GM12878 (cell line): ENCODE measurements at regions of chr2 and their contacts with region 1.

Region 1: GRCh38 chr2:37877457-37878315 is 47.4 kb upstream of the RMDN2 start:
- DNase-seq: no peak
- ATAC-seq: peak; percentile 77
- H3K4me3 ChIP-seq: no peak overlapping the region
- H3K27ac ChIP-seq: no peak overlapping the region
- H3K4me1 ChIP-seq: peaks cover 8% of the 10 kb centered on the region
- H3K27me3 ChIP-seq: peaks cover 0 to 2% of the 10 kb centered on the region in 2 experiments; a peak in 2 of 4 replicates
- CTCF ChIP-seq: peak; percentile 44 to 64 (median 63); a peak in 5 of 6 replicates
- EP300 ChIP-seq: no peak
- POLR2A ChIP-seq: no peak
- RAD21 ChIP-seq: peak; percentile 91

Region 2: GRCh38 chr2:37570773-37571586 is 306.7 kb before region 1 on chr2:
- CTCF ChIA-PET with region 1: interaction called, 5 read pairs
- POLR2A ChIA-PET with region 1: interaction called, 3 read pairs
- RAD21 ChIA-PET with region 1: interaction called, 15 read pairs
- SMC1A ChIA-PET with region 1: interaction called, 7 read pairs
- in situ Hi-C with region 1: no loop called
- intact Hi-C with region 1: no loop called
- DNase-seq: peak; percentile 98
- ATAC-seq: peak; percentile 87
- H3K4me3 ChIP-seq: peak overlapping the region; percentile 0; the same call in 1 of the 2 replicates
- H3K27ac ChIP-seq: peak overlapping the region; percentile 90
- H3K4me1 ChIP-seq: peaks cover 41% of the 10 kb centered on the region
- H3K27me3 ChIP-seq: no peaks in the 10 kb centered on the region
- CTCF ChIP-seq: no peak
- EP300 ChIP-seq: peak; percentile 86 to 87
- POLR2A ChIP-seq: peak; percentile 59
- RAD21 ChIP-seq: peak; percentile 45

Region 3: GRCh38 chr2:37672104-37672869 is 205.4 kb before region 1 on chr2:
- CTCF ChIA-PET with region 1: interaction called, 15 read pairs
- POLR2A ChIA-PET with region 1: interaction called, 4 read pairs
- RAD21 ChIA-PET with region 1: interaction called, 8 read pairs
- SMC1A ChIA-PET with region 1: interaction called, 21 read pairs
- in situ Hi-C with region 1: no loop called
- intact Hi-C with region 1: loop called (anchors 2 kb)
- DNase-seq: no peak
- ATAC-seq: peak; percentile 58
- H3K4me3 ChIP-seq: peak overlapping the region; percentile 87
- H3K27ac ChIP-seq: peak overlapping the region; percentile 77
- H3K4me1 ChIP-seq: no peaks in the 10 kb centered on the region; the same call in 1 of the 2 replicates
- H3K27me3 ChIP-seq: no peaks in the 10 kb centered on the region
- CTCF ChIP-seq: no peak
- EP300 ChIP-seq: no peak
- POLR2A ChIP-seq: peak; percentile 51; the same call in 1 of the 2 replicates
- RAD21 ChIP-seq: no peak

Region 4: DNA sequence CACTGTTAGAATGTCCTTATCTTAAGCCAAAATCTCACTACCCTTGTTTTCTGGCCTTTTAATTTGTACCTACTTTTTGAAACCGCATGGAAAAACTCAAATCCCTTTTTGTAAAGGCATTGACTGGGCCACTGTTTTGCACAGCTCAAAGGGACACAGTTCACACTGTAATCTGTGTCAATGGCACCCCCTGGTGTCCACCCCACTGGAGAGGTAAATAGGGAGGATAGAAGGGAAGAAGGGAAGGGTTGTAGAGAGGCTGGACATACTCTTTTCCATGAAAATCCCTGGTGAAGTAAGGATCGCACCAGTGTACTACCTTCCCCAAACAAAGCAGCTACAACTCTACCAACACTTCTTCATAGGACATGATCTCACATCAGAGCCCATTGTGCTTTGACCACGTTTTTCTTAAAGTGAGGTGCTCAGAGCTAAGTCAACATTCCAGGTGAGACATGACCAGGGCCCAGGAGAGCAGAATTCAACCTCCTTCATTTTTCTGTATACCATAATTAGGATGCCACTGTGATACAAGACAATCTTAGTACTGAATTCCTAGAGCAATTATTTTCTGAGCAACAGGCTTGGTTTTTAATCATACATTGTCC is 45.0 kb before region 1 on chr2:
- CTCF ChIA-PET with region 1: interaction called, 312 read pairs
- POLR2A ChIA-PET with region 1: interaction called, 12 read pairs
- RAD21 ChIA-PET with region 1: interaction called, 185 read pairs
- SMC1A ChIA-PET with region 1: interaction called, 197 read pairs
- in situ Hi-C with region 1: no loop called
- intact Hi-C with region 1: loop called (anchors 1 kb)
- DNase-seq: peak; percentile 68
- ATAC-seq: peak; percentile 92
- H3K4me3 ChIP-seq: no peak overlapping the region
- H3K27ac ChIP-seq: peak overlapping the region; percentile 50
- H3K4me1 ChIP-seq: peaks cover 4% of the 10 kb centered on the region
- H3K27me3 ChIP-seq: no peaks in the 10 kb centered on the region
- CTCF ChIP-seq: peak; percentile 74 to 88 (median 84)
- EP300 ChIP-seq: no peak
- POLR2A ChIP-seq: no peak
- RAD21 ChIP-seq: peak; percentile 100

Region 5: DNA sequence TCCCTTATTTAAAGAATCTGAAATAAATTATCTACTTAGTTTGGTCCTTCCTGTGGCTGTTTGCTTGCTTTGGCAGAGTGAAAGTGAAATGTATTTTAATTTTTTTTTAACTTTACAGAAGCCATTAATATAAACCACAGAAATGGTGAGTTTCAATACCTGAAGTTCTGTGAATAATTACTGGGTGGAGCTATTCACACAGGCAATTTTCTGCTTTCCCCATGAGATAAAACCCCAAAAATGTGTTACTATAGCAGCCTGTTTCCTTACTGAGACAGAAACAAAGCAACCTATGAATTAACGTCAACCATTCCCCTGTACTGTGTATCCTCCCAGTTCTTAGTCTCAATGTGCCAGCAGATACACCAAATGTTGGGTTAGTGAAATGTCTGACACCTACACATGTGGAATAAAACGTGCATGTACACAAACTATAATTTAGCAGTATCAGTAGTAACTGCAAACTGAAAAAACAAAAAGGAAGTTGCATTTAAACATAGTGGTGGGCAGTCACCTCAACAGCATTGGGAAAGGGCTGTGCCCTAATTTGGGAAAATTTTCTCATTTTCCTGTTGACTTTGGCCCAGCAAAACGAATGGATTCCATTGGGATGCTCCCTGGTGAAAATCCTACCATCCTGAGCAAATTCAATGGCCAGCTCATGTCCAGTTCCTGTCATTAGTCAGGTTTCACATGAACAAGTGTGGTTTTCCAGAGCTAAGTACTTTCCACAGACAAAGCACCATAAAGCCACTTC is 25.7 kb before region 1 on chr2:
- CTCF ChIA-PET with region 1: interaction called, 176 read pairs
- POLR2A ChIA-PET with region 1: interaction called, 61 read pairs
- RAD21 ChIA-PET with region 1: interaction called, 215 read pairs
- SMC1A ChIA-PET with region 1: interaction called, 244 read pairs
- in situ Hi-C with region 1: no loop called
- intact Hi-C with region 1: loop called (anchors 2 kb)
- DNase-seq: peak; percentile 80
- ATAC-seq: peak; percentile 86
- H3K4me3 ChIP-seq: peak overlapping the region; percentile 17; the same call in 1 of the 2 replicates
- H3K27ac ChIP-seq: peak overlapping the region; percentile 67
- H3K4me1 ChIP-seq: peaks cover 32% of the 10 kb centered on the region
- H3K27me3 ChIP-seq: no peaks in the 10 kb centered on the region
- CTCF ChIP-seq: peak in 1 of 3 experiments; percentile 8; a peak in 1 of 6 replicates
- EP300 ChIP-seq: peak; percentile 23 to 53; a peak in 1 of 4 replicates
- POLR2A ChIP-seq: no peak
- RAD21 ChIP-seq: peak; percentile 45

Region 6: DNA sequence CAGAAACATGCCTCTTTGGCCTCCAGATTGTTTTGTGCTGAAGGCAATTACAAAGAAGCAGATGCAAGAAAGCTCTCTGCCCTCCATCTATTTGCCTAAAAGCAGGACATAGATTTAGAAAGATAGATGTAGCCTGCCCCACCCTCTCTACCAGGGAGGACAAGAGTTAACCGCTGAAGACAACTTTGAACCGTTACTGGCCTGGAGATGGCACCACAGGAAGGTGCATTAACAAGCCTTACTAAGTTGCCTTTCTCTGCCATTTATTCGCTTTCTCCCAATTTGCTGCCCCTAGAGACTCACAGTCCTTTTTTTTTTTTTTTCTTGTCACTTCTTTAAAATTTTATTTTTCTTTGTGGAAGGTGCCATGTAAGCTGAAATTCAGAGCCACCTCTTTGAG is 18.6 kb after region 1 on chr2:
- CTCF ChIA-PET with region 1: interaction called, 82 read pairs
- POLR2A ChIA-PET with region 1: interaction called, 4 read pairs
- RAD21 ChIA-PET with region 1: interaction called, 7 read pairs
- SMC1A ChIA-PET with region 1: interaction called, 21 read pairs
- in situ Hi-C with region 1: no loop called
- intact Hi-C with region 1: no loop called
- DNase-seq: no peak
- ATAC-seq: no peak
- H3K4me3 ChIP-seq: no peak overlapping the region
- H3K27ac ChIP-seq: no peak overlapping the region
- H3K4me1 ChIP-seq: peaks cover 40% of the 10 kb centered on the region
- H3K27me3 ChIP-seq: no peaks in the 10 kb centered on the region
- CTCF ChIP-seq: peak in 2 of 3 experiments; percentile 5 to 30; a peak in 3 of 6 replicates
- EP300 ChIP-seq: no peak
- POLR2A ChIP-seq: no peak
- RAD21 ChIP-seq: peak; percentile 56